AG04450 (cell line): ENCODE measurements at regions of chr13 and their contacts with region 1.

Region 1: DNA sequence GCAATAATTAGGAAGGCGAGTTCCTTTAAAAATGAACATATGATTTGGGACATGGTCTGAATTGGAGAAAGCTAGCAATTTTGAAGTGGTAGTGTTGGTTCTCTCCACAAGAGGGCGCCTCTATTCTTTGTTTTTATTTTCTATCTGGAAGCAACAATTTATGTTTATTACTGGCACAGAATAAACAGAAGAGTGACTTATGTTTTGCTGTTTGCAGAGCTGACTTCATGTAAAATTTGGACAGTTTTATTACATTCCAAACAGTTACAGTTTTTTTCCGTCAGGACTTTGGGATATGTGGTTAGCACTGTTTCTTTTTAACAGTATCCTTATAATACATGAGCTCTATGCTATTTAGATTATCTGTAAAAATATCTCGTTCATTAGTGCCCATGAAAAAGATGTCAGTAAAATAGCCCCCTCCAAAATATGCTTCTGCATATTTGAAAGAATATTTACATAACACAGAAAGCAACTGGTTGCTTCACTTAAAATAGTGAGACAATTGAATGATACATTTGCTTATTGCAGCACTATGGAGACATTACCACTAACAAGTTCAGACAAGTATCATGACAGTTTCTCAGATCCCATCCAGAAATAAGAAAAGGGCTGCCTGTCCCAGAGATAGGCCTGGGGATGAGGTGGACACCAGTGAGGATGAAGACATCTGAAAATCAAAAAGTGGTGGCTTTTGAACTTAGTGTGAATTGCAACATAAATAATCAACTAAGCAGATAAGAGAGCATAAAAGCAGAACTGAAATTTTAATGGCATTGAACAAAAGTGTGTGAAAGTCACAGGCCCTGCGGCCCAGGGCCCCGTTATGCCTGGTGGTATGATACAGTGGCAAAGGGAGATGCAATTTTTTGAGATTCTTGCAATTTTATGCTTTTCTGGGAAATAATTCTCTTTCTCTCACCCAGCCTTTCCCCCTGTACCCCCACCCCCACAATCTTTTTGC is 32.3 kb upstream of the FGF9 start:
- DNase-seq: no peak
- H3K4me3 ChIP-seq: no peak overlapping the region
- H3K27ac ChIP-seq: no peak overlapping the region
- H3K27me3 ChIP-seq: peaks cover 6% of the 10 kb centered on the region
- CTCF ChIP-seq: peak; percentile 74

Region 2: DNA sequence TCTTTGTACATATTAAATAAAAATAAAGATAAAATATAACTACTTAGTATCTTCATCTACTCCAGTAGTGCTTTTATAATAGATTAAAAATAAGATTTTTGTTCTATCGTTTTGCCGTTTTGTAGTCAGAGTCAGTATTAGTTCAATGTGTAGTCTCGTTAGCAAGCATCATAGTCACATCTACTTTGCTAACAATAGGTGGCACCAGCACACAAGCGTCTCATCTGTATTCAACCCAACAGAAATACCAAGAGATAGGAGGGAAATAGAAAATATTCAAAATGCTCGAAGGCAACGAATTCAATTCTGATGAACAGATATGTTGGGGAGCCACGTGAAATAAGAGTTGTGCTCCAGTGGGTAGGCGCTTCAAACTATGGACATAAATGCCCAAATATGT is 13.2 kb before region 1 on chr13:
- CTCF ChIA-PET with region 1: interaction called, 11 read pairs
- POLR2A ChIA-PET with region 1: no interaction called
- DNase-seq: no peak
- H3K4me3 ChIP-seq: no peak overlapping the region
- H3K27ac ChIP-seq: no peak overlapping the region
- H3K27me3 ChIP-seq: peaks cover 9% of the 10 kb centered on the region
- CTCF ChIP-seq: peak; percentile 66

Region 3: DNA sequence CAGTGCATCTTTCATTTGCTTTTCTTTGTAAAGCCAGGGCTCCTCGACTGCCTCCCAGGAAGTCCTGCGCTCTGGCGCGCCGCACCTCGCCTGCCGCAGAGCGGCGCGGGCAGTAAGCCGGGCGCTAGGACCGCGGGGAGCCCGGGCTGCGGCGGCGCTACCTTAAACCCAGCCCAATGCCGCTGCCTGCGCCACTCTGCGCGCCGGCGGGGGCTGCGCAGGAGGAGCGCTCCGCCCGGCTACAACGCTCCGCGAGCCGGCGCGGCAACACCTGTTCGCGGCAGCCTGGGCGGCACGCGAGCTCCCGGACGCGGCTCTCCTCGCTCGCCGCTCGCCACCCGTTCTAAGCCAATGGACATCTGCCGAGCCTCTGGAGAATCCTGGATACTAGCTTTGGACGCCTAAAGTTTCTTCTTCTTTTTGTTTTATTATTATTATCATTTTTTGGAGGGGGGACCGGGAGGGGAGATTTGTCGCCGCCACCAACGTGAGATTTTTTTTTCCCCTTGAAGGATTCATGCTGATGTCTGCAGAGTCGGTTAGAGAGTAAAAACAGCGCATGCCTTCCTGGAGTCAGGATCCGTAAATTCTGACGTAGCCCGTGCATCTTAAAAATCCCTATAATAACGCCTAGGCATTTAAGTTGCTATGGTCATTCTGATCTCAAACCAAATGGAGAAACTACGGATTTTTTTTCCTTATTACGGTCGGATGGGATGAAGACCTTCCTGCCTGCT is 32.5 kb after region 1 on chr13 and contains the start of gene FGF9:
- CTCF ChIA-PET with region 1: interaction called, 10 read pairs
- POLR2A ChIA-PET with region 1: no interaction called
- DNase-seq: no peak
- H3K4me3 ChIP-seq: peak within 1 kb of the TSS; percentile 61
- H3K27ac ChIP-seq: no peak within 1 kb of the TSS
- H3K27me3 ChIP-seq: peaks cover 48% of the 10 kb centered on the region
- CTCF ChIP-seq: 0 out of 2 replicates have a peak, but pooled peaks have one; percentile 10
- polyA plus RNA-seq, gene FGF9: 0.12 and 0.26 TPM in 2 replicates

Region 4: DNA sequence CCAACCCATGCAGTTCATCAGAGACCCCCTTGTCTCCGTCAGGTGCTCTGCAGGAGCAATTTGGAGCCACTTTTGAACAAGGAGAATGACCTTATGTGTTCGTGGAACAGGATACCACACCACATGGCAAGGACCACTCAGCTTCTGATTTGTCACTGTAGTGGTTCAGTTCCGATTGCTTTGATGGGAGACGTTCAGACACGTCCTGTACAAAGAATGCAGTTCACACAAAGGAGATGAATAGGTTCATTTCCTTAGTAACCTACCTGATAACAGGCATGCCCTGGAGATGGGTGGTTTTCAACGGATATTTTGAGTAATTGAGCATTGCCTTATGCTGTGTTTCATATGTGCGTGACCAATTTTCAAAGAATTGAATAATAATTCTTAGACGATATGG is 49.5 kb after region 1 on chr13:
- CTCF ChIA-PET with region 1: no interaction called
- POLR2A ChIA-PET with region 1: no interaction called
- DNase-seq: no peak
- H3K4me3 ChIP-seq: no peak overlapping the region
- H3K27ac ChIP-seq: no peak overlapping the region
- H3K27me3 ChIP-seq: peaks cover 10% of the 10 kb centered on the region
- CTCF ChIP-seq: no peak

Region 5: DNA sequence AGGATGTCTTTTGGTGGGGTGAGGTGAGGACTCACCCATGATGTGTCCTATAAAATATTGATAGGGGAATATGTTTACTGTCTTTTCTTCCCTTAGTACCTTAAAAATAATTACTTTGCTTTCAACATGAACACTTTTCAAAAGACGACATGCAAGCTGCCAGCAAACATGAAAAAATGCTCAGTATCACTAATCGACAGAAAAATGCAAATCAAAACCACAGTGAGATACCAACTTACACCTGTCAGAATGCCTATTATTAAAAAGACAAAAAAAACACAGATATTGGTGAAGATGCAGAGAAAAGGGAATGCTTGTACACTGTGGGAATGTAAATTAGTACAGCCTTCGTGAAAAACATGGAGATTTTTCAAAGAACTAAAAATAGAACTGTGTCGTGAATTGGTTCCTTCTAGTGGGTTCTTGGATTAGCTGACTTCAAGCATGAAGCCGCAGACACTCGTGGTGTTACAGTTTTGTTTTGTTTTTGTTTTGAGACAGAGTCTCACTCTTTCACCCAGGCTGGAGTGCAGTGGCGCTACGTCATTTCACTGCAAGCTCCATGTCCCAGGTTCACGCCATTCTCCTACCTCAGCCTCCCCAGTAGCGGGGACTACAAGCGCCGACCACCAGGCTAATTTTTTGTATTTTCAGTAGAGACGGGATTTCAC is 193.2 kb after region 1 on chr13:
- CTCF ChIA-PET with region 1: no interaction called
- POLR2A ChIA-PET with region 1: no interaction called
- DNase-seq: no peak
- H3K4me3 ChIP-seq: no peak overlapping the region
- H3K27ac ChIP-seq: no peak overlapping the region
- H3K27me3 ChIP-seq: no peaks in the 10 kb centered on the region
- CTCF ChIP-seq: no peak

Region 6: DNA sequence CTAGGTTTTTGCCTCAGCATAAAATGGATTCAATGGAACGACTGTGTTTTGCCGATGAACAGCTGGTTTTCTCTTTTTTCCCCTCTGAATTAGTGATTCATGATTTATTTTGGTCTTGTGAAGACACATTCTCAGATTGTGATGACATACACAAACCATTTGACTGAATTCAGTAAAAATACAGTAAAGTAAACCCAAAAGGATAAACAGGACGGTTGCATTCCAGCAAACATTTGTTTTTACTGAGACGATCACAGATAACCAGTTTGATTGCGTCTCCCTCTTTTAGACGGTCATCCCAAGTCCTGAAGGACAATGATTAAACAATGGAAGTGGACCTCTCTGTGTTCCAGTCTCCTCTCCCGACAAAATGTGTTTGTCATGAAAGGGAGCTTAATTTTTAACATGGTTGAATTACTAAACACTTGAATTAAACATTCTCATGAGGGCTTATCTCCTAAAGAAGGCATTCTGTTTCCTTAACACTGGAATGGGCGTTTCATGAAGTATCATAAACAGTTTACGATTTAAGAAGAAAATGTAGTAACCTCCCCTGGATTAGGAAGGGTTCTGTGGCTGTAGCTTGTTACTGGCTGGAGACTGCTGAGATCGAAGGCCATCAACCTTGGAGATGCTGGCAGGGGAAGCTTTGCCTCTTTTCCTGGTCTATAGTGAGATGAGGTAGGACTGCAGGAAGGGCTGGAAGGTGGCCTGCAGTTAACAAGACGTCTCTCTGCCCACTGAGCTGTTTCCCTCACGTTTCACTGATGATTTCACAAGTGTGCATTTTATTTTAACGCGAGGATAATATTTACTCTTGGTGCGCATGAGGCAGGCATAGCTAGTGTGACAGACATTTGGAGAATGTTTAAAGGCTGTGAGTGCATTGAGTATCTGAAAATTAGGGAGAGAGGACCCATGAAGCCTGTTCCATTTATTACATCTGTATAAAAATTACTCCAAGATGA is 490.1 kb after region 1 on chr13:
- CTCF ChIA-PET with region 1: interaction called, 10 read pairs
- POLR2A ChIA-PET with region 1: no interaction called
- DNase-seq: no peak
- H3K4me3 ChIP-seq: no peak overlapping the region
- H3K27ac ChIP-seq: peak overlapping the region; percentile 83
- H3K27me3 ChIP-seq: no peaks in the 10 kb centered on the region
- CTCF ChIP-seq: no peak

Region 7: GRCh38 chr13:22757530-22758120 is 1119.0 kb after region 1 on chr13:
- CTCF ChIA-PET with region 1: interaction called, 23 read pairs
- POLR2A ChIA-PET with region 1: no interaction called
- DNase-seq: no peak
- H3K4me3 ChIP-seq: no peak overlapping the region
- H3K27ac ChIP-seq: no peak overlapping the region
- H3K27me3 ChIP-seq: no peaks in the 10 kb centered on the region
- CTCF ChIP-seq: 0 out of 2 replicates have a peak, but pooled peaks have one; percentile 8